ENCODE measurements at regions of chr1 and their contacts with region 1.

Region 1: DNA sequence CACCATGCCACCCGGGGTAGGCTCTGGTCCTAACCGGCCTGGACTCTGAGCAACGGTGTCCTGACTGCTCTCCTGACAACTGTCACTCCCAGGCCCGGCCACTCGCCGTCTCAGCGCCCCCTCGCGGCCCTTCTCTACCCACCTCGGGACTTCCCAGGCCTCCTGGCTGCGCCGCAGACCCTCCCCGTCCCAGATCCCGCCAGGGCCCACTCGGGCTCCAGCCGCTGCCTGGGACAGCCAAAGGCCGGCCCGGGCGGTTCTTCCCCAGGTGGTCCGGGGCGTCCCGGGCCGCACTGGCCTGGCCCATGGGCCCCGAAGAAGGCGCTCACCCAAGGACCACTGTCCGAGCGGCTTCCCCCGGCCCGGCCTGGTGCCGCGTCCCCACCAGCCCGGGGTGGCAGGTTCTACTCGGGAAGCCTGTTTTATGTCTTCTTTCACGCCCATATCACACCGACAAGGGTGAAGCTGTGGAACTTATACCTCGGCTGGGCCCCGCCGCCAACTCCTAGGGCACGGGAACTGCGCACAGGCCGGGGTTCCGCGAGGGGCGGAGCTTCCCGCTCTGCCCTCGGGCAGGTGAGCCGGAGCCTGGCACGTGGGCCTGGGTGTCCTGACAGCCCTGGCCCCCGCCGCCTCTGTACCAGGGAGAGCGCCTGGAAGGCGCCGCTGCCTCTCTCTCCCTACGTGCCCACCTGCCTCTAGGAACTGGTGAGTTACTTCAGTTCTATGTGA is 138.3 kb downstream of the TTLL7 start:
- DNase-seq: peak; percentile 63 to 69 (median 69)
- H3K4me3 ChIP-seq: peak overlapping the region; percentile 13 to 61
- H3K4me3 Mint-ChIP-seq: peak overlapping the region; percentile 79 to 93 (median 86)
- H3K27ac ChIP-seq: peak overlapping the region; percentile 64
- H3K27ac Mint-ChIP-seq: peak overlapping the region; percentile 14 to 90 (median 87)
- H3K4me1 ChIP-seq: peaks cover 6% of the 10 kb centered on the region
- H3K4me1 Mint-ChIP-seq: peaks cover 7 to 14% (median 12%) of the 10 kb centered on the region in 4 donors
- H3K27me3 ChIP-seq: no peaks in the 10 kb centered on the region
- H3K27me3 Mint-ChIP-seq: no peaks in the 10 kb centered on the region

Region 2: DNA sequence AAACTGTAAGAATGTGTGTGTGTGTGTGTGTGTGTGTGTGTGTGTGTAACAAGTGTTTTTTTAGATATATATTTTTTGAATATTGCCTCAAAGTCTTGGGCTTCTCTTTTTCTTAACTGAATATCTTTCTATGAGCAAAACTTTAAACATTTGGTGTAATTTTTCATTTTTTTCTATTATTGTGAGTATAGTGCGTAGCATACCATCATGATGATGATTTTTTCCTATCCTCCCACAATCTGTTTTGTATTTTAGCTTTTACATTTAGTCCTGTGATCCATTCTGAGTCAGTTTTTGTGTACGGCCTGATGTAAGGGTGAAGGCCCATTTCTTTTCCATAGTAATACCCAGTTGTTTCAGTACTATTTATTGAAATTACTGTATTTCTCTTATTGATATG is 542.3 kb before region 1 on chr1:
- CTCF ChIA-PET with region 1: no interaction called
- POLR2A ChIA-PET with region 1: no interaction called
- intact Hi-C with region 1: loop called (anchors 10 kb)
- DNase-seq: no peak
- H3K4me3 ChIP-seq: no peak overlapping the region
- H3K4me3 Mint-ChIP-seq: no peak overlapping the region
- H3K27ac ChIP-seq: no peak overlapping the region
- H3K27ac Mint-ChIP-seq: no peak overlapping the region
- H3K4me1 ChIP-seq: no peaks in the 10 kb centered on the region
- H3K4me1 Mint-ChIP-seq: no peaks in the 10 kb centered on the region
- H3K27me3 ChIP-seq: no peaks in the 10 kb centered on the region
- H3K27me3 Mint-ChIP-seq: no peaks in the 10 kb centered on the region

Region 3: DNA sequence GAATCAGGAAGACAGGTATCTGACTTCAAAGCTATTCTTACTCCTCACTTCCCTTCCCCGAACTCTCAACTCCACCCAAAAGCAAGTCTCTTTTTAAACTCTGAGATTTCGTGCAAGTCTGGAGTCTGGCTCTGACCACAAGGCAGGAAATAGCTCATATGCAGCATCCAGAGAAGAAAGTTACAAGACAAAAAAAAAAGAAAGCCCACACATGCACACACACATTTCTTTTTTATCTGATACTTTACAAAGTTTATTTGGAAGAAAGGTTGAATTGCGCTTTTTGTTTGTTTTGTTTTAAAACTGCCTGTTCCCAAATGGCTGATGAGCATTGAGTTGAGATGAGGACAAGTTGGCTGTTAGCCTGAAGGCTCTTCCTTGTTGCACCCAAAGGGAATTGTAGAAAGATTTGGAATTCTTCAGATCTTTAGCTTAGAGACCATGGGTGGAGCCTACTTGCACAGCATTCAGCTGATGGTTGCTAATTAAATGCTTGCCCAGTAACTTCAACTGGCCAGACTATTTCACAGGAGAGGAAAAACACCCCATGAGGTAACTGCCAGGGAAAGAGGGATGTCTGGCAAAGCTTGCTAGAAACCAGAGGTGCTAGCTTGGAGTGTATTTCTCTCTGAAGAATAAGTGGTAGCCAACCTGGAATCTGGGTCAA is 352.0 kb before region 1 on chr1:
- CTCF ChIA-PET with region 1: no interaction called
- POLR2A ChIA-PET with region 1: no interaction called
- intact Hi-C with region 1: loop called (anchors 2 kb)
- DNase-seq: peak; percentile 66 to 79 (median 68)
- H3K4me3 ChIP-seq: peak overlapping the region in 1 of 2 donors; percentile 12
- H3K4me3 Mint-ChIP-seq: peak overlapping the region; percentile 55 to 79 (median 72)
- H3K27ac ChIP-seq: peak overlapping the region; percentile 14
- H3K27ac Mint-ChIP-seq: peak overlapping the region; percentile 81 to 93 (median 88)
- H3K4me1 ChIP-seq: peaks cover 29% of the 10 kb centered on the region
- H3K4me1 Mint-ChIP-seq: peaks cover 27 to 41% (median 30%) of the 10 kb centered on the region in 4 donors
- H3K27me3 ChIP-seq: no peaks in the 10 kb centered on the region
- H3K27me3 Mint-ChIP-seq: no peaks in the 10 kb centered on the region

Region 4: GRCh38 chr1:84060781-84061180 is 200.1 kb after region 1 on chr1:
- CTCF ChIA-PET with region 1: no interaction called
- POLR2A ChIA-PET with region 1: no interaction called
- intact Hi-C with region 1: no loop called
- DNase-seq: no peak
- H3K4me3 ChIP-seq: no peak overlapping the region
- H3K4me3 Mint-ChIP-seq: no peak overlapping the region
- H3K27ac ChIP-seq: no peak overlapping the region
- H3K27ac Mint-ChIP-seq: no peak overlapping the region
- H3K4me1 ChIP-seq: no peaks in the 10 kb centered on the region
- H3K4me1 Mint-ChIP-seq: no peaks in the 10 kb centered on the region
- H3K27me3 ChIP-seq: no peaks in the 10 kb centered on the region
- H3K27me3 Mint-ChIP-seq: peaks cover 4 to 11% of the 10 kb centered on the region in 2 donors

Region 5: GRCh38 chr1:84402060-84402459 is 541.4 kb after region 1 on chr1:
- CTCF ChIA-PET with region 1: no interaction called
- POLR2A ChIA-PET with region 1: no interaction called
- intact Hi-C with region 1: no loop called
- DNase-seq: no peak
- H3K4me3 ChIP-seq: no peak overlapping the region
- H3K4me3 Mint-ChIP-seq: no peak overlapping the region
- H3K27ac ChIP-seq: no peak overlapping the region
- H3K27ac Mint-ChIP-seq: no peak overlapping the region
- H3K4me1 ChIP-seq: no peaks in the 10 kb centered on the region
- H3K4me1 Mint-ChIP-seq: no peaks in the 10 kb centered on the region
- H3K27me3 ChIP-seq: no peaks in the 10 kb centered on the region
- H3K27me3 Mint-ChIP-seq: peaks cover 0 to 3% of the 10 kb centered on the region in 2 donors

Region 6: DNA sequence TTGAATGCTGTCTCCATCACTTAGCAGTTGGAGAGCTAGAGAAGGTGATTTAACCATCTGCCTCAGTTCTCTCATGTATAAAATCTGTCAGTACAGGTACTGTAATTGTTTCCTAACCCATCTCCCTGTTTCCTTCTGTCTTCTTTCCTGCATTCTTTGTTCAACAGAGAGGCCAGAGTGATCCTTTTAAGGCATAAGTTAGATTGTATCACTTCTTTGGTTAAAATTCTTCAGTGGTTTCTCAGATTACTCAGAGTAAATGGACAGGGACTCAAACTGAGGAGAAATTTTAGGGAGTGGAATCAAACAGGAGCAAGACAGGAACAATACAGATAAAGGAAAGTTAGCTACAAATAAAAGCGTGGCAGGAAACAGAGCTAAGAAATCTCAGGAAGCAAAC is 874.8 kb after region 1 on chr1:
- CTCF ChIA-PET with region 1: no interaction called
- POLR2A ChIA-PET with region 1: no interaction called
- intact Hi-C with region 1: no loop called
- DNase-seq: no peak
- H3K4me3 ChIP-seq: no peak overlapping the region
- H3K4me3 Mint-ChIP-seq: no peak overlapping the region
- H3K27ac ChIP-seq: no peak overlapping the region
- H3K27ac Mint-ChIP-seq: no peak overlapping the region
- H3K4me1 ChIP-seq: no peaks in the 10 kb centered on the region
- H3K4me1 Mint-ChIP-seq: no peaks in the 10 kb centered on the region
- H3K27me3 ChIP-seq: no peaks in the 10 kb centered on the region
- H3K27me3 Mint-ChIP-seq: peaks cover 18% of the 10 kb centered on the region in 2 donors

Measured in CD4-positive, alpha-beta memory T cell (primary cell).